WTC11 (cell line): ENCODE measurements at regions of chr16 and their contacts with region 1.

Region 1: DNA sequence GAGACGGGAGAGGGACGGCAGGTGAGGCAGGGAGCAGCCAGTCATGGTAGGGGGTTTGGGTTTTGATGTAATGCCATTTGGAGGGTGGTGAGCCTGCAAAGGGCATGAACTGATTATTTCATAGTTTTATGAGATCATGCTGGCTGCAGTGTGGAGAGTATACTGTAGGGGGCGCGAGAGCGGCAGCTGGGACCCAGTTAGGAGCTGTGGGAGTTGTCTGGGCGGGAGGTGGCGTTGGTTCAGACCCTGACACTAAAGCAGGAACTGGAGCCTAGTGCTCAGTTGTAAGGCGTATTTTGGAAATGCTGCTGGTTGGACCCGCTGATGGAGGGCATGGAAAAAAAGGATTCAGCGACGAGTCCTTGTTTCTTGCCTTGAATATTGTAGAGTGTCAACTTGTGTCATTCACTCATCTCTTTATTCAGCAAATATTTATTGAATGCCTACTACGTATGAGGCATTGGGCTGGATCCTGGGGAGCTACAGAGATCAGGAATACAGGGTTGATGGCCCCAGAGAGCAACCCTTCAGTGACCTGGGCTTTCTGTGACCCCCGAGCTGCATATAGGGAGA is 23.7 kb upstream of the KDM8 start:
- DNase-seq: peak; percentile 92
- ATAC-seq: peak; percentile 96
- H3K4me3 Mint-ChIP-seq: no peak overlapping the region
- H3K27ac Mint-ChIP-seq: no peak overlapping the region
- H3K4me1 Mint-ChIP-seq: no peaks in the 10 kb centered on the region
- H3K27me3 Mint-ChIP-seq: peaks cover 3% of the 10 kb centered on the region
- CTCF ChIP-seq: peak; percentile 75

Region 2: DNA sequence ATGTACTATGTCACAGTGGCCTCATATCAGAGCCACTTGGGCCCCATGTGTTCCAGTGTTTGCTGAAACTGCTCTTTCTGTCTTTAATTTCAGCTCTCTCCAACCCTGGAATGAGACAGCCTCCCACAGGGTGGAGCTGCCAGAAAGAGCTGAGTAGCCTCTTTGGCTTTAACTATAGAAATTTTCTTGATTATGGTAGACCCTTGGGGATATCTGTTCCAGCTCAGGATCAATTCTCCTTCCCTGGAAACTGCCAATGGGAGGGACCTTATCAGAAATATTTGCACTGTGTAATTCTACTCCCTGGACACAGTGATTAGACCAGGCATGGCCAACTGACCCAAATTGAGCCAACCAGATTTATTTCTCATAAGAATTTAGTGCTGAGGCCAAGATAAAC is 15.2 kb before region 1 on chr16:
- CTCF ChIA-PET with region 1: interaction called, 55 read pairs
- POLR2A ChIA-PET with region 1: no interaction called
- DNase-seq: no peak
- ATAC-seq: no peak
- H3K4me3 Mint-ChIP-seq: no peak overlapping the region
- H3K27ac Mint-ChIP-seq: no peak overlapping the region
- H3K4me1 Mint-ChIP-seq: no peaks in the 10 kb centered on the region
- H3K27me3 Mint-ChIP-seq: 0 out of 2 replicates have a peak, but pooled peaks cover 6% of the 10 kb centered on the region
- CTCF ChIP-seq: no peak

Region 3: GRCh38 chr16:27222249-27223225 is 43.0 kb after region 1 on chr16:
- CTCF ChIA-PET with region 1: interaction called, 24 read pairs
- POLR2A ChIA-PET with region 1: no interaction called
- DNase-seq: no peak
- ATAC-seq: no peak
- H3K4me3 Mint-ChIP-seq: no peak overlapping the region
- H3K27ac Mint-ChIP-seq: peak overlapping the region; percentile 15; the same call in 1 of the 2 replicates
- H3K4me1 Mint-ChIP-seq: no peaks in the 10 kb centered on the region
- H3K27me3 Mint-ChIP-seq: no peaks in the 10 kb centered on the region
- CTCF ChIP-seq: no peak

Region 4: GRCh38 chr16:27315277-27316037 is 135.9 kb after region 1 on chr16:
- CTCF ChIA-PET with region 1: interaction called, 11 read pairs
- POLR2A ChIA-PET with region 1: no interaction called
- DNase-seq: peak; percentile 19
- ATAC-seq: peak; percentile 11; the same call in 1 of the 2 replicates
- H3K4me3 Mint-ChIP-seq: peak overlapping the region; percentile 81
- H3K27ac Mint-ChIP-seq: no peak overlapping the region; the same call in 1 of the 2 replicates
- H3K4me1 Mint-ChIP-seq: peaks cover 42% of the 10 kb centered on the region
- H3K27me3 Mint-ChIP-seq: peaks cover 3% of the 10 kb centered on the region; the same call in 1 of the 2 replicates
- CTCF ChIP-seq: no peak

Region 5: DNA sequence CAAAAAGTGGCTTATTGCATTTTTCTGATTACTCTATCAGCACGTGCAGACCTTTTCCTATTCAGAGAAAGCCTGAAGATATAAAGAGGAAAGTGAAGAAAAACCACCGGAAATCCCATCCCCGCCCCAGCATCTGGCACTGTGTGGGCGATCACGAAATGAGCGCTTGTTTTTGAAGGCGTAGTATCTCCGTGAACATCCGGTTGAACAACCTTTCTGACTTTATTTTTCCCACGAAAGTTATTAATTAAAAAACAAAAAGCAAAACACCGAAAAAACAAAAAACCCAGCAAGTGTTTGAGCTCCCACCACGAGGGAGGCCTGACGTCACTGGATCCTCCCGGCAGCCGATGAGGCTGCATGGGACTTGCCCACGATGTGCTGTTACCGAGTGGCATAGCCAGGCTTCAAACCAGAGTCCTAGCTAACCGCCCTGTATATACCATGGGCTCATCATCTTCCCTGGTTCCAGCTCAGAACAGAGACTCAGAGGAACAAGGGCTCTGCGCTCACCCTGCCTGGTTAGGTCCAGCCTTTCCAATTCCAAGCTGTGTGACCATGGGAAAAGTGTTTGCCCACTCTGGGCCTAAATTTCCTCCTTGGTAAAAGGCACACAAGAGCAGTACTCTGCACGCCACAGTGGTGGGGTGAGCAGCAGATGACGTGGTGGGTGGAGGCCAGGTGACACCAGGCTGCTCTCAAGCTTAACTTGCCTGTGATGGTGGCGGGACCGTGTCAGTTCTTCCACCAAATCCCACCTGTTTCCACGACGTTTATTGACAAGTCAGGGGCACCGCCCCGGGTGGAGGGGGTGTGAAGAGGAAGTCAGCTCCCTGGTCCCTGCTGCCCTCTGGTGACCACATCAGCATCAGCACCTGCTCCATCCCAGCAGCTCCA is 188.1 kb after region 1 on chr16:
- CTCF ChIA-PET with region 1: interaction called, 125 read pairs
- POLR2A ChIA-PET with region 1: interaction called, 4 read pairs
- DNase-seq: peak; percentile 83
- ATAC-seq: peak; percentile 88
- H3K4me3 Mint-ChIP-seq: peak overlapping the region; percentile 4; the same call in 1 of the 2 replicates
- H3K27ac Mint-ChIP-seq: no peak overlapping the region
- H3K4me1 Mint-ChIP-seq: peaks cover 3% of the 10 kb centered on the region; the same call in 1 of the 2 replicates
- H3K27me3 Mint-ChIP-seq: no peaks in the 10 kb centered on the region; the same call in 1 of the 2 replicates
- CTCF ChIP-seq: peak; percentile 74

Region 6: GRCh38 chr16:27405546-27406451 is 226.2 kb after region 1 on chr16:
- CTCF ChIA-PET with region 1: interaction called, 10 read pairs
- POLR2A ChIA-PET with region 1: no interaction called
- DNase-seq: no peak
- ATAC-seq: peak; percentile 62
- H3K4me3 Mint-ChIP-seq: no peak overlapping the region
- H3K27ac Mint-ChIP-seq: no peak overlapping the region
- H3K4me1 Mint-ChIP-seq: peaks cover 27% of the 10 kb centered on the region
- H3K27me3 Mint-ChIP-seq: no peaks in the 10 kb centered on the region
- CTCF ChIP-seq: no peak

Region 7: DNA sequence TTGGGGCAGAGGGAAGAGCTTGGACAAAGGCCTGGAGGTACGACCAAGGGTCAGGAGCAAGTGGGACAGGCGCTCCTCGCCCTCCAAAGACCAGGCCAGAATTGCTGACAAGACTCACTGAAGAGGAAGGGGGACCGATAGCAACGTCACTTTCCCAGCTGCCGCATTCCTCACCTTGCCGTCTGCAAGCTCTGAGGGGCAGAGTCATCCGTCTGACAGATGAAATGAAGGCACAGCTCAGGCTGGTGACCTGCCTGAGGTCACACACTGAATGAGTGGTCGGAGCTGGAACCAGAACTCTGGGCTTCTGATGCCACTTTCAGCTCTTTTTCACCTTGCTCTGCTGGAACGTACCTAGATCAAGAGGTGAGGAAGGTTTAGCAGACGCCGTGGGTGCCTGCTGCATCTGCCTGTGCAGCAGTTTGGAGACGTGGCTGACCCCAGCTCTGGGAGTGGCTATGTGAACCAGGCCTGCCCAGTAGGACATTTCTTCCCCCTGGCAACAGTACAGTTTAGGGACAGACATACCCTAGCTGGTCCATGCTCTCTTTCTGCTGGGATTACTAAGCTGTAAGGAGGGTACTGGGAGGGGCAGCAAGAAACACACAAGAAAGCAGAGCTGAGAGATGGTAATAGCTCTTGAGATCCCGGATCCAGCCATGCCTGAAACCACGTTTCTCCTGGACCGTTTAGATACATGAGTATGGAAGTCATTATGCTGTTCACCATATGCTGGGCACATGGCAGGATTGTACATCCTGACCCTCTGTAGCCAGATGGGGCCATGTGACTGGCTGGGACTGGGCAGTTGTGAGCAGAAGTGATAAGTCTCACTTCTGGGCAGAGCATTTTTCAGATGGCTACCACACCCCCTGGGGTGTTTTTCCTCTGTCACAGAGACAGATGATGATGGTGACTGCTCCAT is 273.2 kb after region 1 on chr16:
- CTCF ChIA-PET with region 1: interaction called, 13 read pairs
- POLR2A ChIA-PET with region 1: no interaction called
- DNase-seq: no peak
- ATAC-seq: no peak
- H3K4me3 Mint-ChIP-seq: no peak overlapping the region
- H3K27ac Mint-ChIP-seq: no peak overlapping the region
- H3K4me1 Mint-ChIP-seq: no peaks in the 10 kb centered on the region; the same call in 1 of the 2 replicates
- H3K27me3 Mint-ChIP-seq: no peaks in the 10 kb centered on the region; the same call in 1 of the 2 replicates
- CTCF ChIP-seq: no peak

Region 8: GRCh38 chr16:27600381-27600780 is 420.8 kb after region 1 on chr16:
- CTCF ChIA-PET with region 1: no interaction called
- POLR2A ChIA-PET with region 1: no interaction called
- DNase-seq: peak; percentile 26
- ATAC-seq: peak; percentile 69
- H3K4me3 Mint-ChIP-seq: no peak overlapping the region
- H3K27ac Mint-ChIP-seq: peak overlapping the region; percentile 63; the same call in 1 of the 2 replicates
- H3K4me1 Mint-ChIP-seq: peaks cover 42% of the 10 kb centered on the region
- H3K27me3 Mint-ChIP-seq: no peaks in the 10 kb centered on the region
- CTCF ChIP-seq: no peak